ENCODE measurements at regions of chr1 and their contacts with region 1.

Region 1: DNA sequence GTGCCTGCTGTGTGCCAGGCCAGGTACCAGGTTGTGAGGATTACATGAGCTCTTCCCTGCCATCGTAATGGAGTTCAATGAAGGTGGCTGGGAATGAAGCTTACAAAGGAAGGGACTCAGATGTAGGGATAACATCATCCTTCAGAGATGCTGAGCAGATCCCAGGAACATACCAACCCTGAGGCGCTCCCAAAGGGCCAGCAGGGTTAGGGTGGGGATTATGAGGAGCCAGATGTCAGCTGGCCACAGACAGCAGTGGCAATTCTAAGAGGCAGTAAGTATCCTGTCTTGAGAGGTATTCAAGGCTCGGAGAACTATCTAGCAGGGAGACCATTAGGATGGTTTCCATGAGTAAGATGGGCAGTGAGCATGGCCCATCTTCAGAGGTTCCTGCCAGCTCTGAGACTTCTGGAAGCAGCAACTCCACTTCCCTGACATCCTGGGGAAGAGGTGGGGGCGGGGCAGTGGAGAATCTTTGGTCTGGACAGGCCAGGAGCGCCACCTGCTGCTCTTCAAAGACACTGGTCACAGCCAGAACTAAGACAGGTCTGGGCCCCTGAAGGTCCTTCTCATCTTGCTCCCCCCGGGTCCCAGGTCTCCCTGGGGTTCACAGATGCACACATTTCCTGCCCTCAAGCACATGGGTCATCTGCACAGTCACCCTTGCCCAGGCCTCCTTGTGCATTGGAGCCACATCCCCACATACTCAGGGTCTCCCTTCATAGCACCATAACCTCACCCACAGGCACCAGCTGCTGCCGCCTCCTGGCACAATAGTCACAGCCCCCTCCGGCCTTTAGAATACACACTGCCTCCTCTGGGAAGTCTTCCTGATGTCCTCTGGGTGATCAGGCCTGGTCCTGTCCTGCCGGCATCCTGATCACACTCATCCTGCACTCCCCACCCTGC is 2.7 kb upstream of the SDC3 start:
- DNase-seq: no peak
- H3K4me3 ChIP-seq: no peak overlapping the region
- H3K27ac ChIP-seq: peak overlapping the region; percentile 16
- H3K4me1 ChIP-seq: peaks cover 35% of the 10 kb centered on the region
- H3K27me3 ChIP-seq: no peaks in the 10 kb centered on the region
- CTCF ChIP-seq: peak; percentile 85 to 96 (median 91)
- POLR2A ChIP-seq: no peak

Region 2: DNA sequence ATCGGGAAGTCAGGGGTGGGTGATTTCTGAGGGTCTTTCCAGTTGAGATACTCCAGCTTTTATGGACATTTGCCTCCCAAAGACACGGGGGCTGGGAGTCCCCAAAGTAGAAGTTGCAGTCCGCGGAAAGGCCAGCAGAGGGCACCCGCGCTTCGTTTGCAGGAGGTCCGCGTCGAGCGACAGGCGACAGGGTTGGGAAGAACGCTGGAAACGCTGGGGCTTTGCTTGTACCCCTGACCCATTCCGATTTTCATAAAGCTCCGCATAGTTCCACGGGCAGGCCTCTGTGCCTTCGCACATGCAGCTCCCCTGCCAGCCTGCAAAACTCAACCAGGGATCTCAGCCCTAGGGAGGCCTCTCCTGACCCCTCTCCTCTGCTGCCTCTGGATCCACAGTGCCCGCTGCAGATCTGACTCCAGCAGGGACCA is 109.5 kb before region 1 on chr1:
- intact Hi-C with region 1: loop called (anchors 2 kb)
- DNase-seq: no peak
- H3K4me3 ChIP-seq: no peak overlapping the region
- H3K27ac ChIP-seq: no peak overlapping the region
- H3K4me1 ChIP-seq: no peaks in the 10 kb centered on the region
- H3K27me3 ChIP-seq: no peaks in the 10 kb centered on the region
- CTCF ChIP-seq: peak; percentile 93 to 97 (median 96)
- POLR2A ChIP-seq: no peak

Region 3: GRCh38 chr1:30933874-30934252 is 22.6 kb after region 1 on chr1:
- intact Hi-C with region 1: no loop called
- DNase-seq: no peak
- H3K4me3 ChIP-seq: no peak overlapping the region
- H3K27ac ChIP-seq: no peak overlapping the region
- H3K4me1 ChIP-seq: peaks cover 4% of the 10 kb centered on the region
- H3K27me3 ChIP-seq: no peaks in the 10 kb centered on the region
- CTCF ChIP-seq: no peak
- POLR2A ChIP-seq: no peak